Mammary epithelial cell (primary cell): ENCODE measurements at regions of chr7 and their contacts with region 1.

Region 1: DNA sequence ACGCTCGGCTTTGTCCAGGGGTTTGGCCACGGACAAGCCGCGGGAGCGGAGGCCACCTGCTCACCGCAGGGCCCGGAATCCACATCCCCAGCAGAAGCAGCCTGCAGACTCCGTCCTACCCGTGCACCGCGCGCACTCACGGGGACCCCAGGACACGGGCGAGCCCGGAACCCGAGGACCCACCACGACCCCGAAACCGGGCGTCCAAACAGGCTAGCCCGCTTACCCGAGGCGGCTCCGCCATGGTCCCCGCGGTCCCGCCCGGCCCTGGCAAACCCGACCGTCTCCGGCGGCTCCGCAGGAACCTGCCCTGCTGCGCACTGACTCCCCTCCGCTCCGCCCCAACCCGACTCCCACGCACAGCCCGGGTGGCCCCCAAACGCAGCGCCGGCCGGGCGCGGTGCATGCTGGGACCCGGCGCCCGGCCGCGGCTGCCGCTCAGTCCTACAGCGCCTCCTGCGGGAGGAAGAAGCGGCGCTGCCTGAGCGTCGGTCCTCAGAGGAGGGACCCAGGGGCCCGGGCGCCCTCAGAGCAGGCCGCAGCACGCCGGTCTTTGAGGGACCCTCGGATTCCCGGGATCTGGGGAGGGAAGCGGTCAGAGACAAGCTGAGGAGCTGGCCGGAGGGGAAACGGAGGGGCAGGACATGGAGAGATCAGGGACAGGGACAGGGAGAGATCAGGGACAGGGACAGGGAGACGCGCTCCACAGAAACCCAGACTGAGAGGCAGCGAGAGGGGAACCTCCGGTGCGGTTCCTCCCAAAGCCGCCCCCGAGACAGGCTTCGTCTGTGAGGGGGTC is at the start of gene ZNF786:
- DNase-seq: peak; percentile 84
- H3K4me3 ChIP-seq: peak within 1 kb of the TSS; percentile 78 to 99 (median 94)
- H3K27ac ChIP-seq: peak within 1 kb of the TSS; percentile 58
- H3K4me1 ChIP-seq: peaks cover 7% of the 10 kb centered on the region
- H3K27me3 ChIP-seq: no peaks in the 10 kb centered on the region
- CTCF ChIP-seq: peak; percentile 58 to 87
- total RNA-seq, gene ZNF786: 5.3 to 15.7 TPM

Region 2: DNA sequence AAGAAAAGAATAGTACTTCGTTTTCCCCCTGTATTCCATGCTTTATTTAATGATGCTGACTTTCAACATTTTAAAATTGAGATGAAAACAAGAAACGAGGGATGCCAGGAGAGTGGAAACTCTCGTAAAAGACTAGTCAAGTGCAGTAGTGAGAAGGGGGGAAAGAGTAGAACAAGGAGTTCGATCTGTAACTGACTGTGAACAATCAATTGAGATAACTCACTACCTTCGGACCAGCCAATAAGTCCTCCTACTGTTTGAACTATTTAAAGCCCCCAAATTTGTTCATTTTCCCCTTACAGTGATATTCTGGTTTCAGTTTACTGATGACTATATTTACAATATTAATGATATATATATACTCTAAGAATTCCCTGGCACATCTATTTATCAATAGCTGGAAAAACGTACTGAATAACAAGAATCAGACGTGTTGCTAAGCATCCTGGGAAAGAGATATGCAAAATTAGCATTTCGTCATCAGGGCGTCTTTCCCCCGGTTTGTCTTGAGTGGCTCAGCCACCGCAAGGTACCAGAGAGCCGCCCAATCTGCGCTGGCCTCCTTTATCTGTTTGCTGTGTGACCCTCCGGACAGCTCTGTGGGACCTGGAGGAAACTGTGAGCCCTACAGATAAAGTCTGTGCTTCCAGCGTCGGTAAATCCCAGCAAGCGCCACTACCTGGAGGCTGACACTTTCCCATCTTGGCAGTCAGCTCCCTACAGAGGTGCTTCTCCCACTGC is 103.4 kb before region 1 on chr7:
- CTCF ChIA-PET with region 1: no interaction called
- dilution Hi-C with region 1: no loop called
- in situ Hi-C with region 1: no loop called
- intact Hi-C with region 1: loop called (anchors 2 kb)
- DNase-seq: peak; percentile 81
- H3K4me3 ChIP-seq: peak overlapping the region; percentile 54 to 59 (median 56)
- H3K27ac ChIP-seq: peak overlapping the region; percentile 84
- H3K4me1 ChIP-seq: peaks cover 29% of the 10 kb centered on the region
- H3K27me3 ChIP-seq: no peaks in the 10 kb centered on the region
- CTCF ChIP-seq: no peak

Region 3: GRCh38 chr7:149005241-149006050 is 85.2 kb before region 1 on chr7:
- CTCF ChIA-PET with region 1: no interaction called
- dilution Hi-C with region 1: no loop called
- in situ Hi-C with region 1: no loop called
- intact Hi-C with region 1: loop called (anchors 1 kb)
- DNase-seq: peak; percentile 23
- H3K4me3 ChIP-seq: no peak overlapping the region
- H3K27ac ChIP-seq: no peak overlapping the region
- H3K4me1 ChIP-seq: no peaks in the 10 kb centered on the region
- H3K27me3 ChIP-seq: no peaks in the 10 kb centered on the region
- CTCF ChIP-seq: peak; percentile 59 to 75

Region 4: GRCh38 chr7:149028346-149029109 is 62.1 kb before region 1 on chr7 and contains the start of gene PDIA4:
- CTCF ChIA-PET with region 1: no interaction called
- dilution Hi-C with region 1: no loop called
- in situ Hi-C with region 1: no loop called
- intact Hi-C with region 1: loop called (anchors 1 kb)
- DNase-seq: peak; percentile 100
- H3K4me3 ChIP-seq: peak within 1 kb of the TSS; percentile 82 to 93 (median 90)
- H3K27ac ChIP-seq: peak within 1 kb of the TSS; percentile 75
- H3K4me1 ChIP-seq: peaks cover 21% of the 10 kb centered on the region
- H3K27me3 ChIP-seq: no peaks in the 10 kb centered on the region
- CTCF ChIP-seq: peak in 1 of 2 donors; percentile 31
- total RNA-seq, gene PDIA4: 175 to 189 TPM

Region 5: GRCh38 chr7:149125863-149126661 is 35.5 kb after region 1 on chr7 and contains the start of gene ZNF425:
- CTCF ChIA-PET with region 1: no interaction called
- dilution Hi-C with region 1: no loop called
- in situ Hi-C with region 1: no loop called
- intact Hi-C with region 1: loop called (anchors 1 kb)
- DNase-seq: peak; percentile 92
- H3K4me3 ChIP-seq: peak within 1 kb of the TSS; percentile 67 to 87 (median 78)
- H3K27ac ChIP-seq: peak within 1 kb of the TSS; percentile 93
- H3K4me1 ChIP-seq: peaks cover 7% of the 10 kb centered on the region
- H3K27me3 ChIP-seq: no peaks in the 10 kb centered on the region
- CTCF ChIP-seq: peak; percentile 61 to 94
- total RNA-seq, gene ZNF425: 3.0 to 3.3 TPM